ENCODE measurements at regions of chr1 and their contacts with region 1.

Region 1: GRCh38 chr1:116570358-116571200 is at the start of gene CD58:
- DNase-seq: peak; percentile 95 to 97 (median 95)
- ATAC-seq: peak; percentile 91
- H3K4me3 ChIP-seq: peak within 1 kb of the TSS; percentile 82
- H3K27ac ChIP-seq: peak within 1 kb of the TSS; percentile 88
- H3K4me1 ChIP-seq: peaks cover 45 to 54% of the 10 kb centered on the region in 2 experiments
- H3K27me3 ChIP-seq: no peaks in the 10 kb centered on the region
- CTCF ChIP-seq: peak; percentile 80 to 90 (median 83)
- EP300 ChIP-seq: no peak; the same call in 1 of the 2 replicates
- POLR2A ChIP-seq: peak; percentile 89
- RAD21 ChIP-seq: peak; percentile 52 to 59
- polyA plus RNA-seq, gene CD58: 24.6 to 33.0 TPM

Region 2: DNA sequence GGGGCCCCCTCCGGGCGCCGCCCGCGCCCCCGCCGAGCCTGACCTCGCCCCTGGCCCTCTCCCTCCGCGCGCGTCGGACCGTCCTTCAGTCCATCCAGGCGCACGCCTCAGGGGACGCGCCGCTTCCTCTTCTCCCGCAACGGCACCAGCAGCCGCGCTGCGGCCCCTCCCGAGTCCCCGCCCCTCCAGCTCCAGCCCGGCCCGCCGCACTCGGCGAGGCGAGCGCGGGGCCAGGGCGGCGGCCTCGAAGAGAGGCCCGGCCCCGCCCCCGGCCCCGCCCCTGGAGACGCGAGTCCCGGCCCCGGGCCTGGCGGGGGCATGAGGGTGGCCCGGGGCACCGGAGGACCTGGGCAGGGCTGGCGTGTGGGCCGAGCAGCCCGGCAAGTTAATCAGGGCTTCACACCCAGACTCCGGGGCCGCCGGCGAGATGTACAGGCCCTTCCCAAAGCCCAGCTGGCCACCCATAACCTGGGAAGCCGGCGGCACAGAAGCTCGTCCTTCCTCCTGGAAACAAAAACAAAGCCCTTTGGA is 97.1 kb after region 1 on chr1 and contains the start of gene IGSF3:
- CTCF ChIA-PET with region 1: interaction called, 10 read pairs
- POLR2A ChIA-PET with region 1: interaction called, 3 read pairs
- in situ Hi-C with region 1: no loop called
- intact Hi-C with region 1: loop called (anchors 1 kb)
- DNase-seq: peak; percentile 93 to 97 (median 95)
- ATAC-seq: peak; percentile 97
- H3K4me3 ChIP-seq: peak within 1 kb of the TSS; percentile 61
- H3K27ac ChIP-seq: peak within 1 kb of the TSS; percentile 30; the same call in 1 of the 3 replicates
- H3K4me1 ChIP-seq: peaks cover 17 to 20% of the 10 kb centered on the region in 2 experiments
- H3K27me3 ChIP-seq: no peaks in the 10 kb centered on the region
- CTCF ChIP-seq: no peak; a peak in 1 of 6 replicates
- EP300 ChIP-seq: no peak
- POLR2A ChIP-seq: no peak; the same call in 1 of the 2 replicates
- RAD21 ChIP-seq: no peak
- polyA plus RNA-seq, gene IGSF3: 1.1 to 1.2 TPM

Region 3: GRCh38 chr1:116724765-116725375 is 154.3 kb after region 1 on chr1:
- CTCF ChIA-PET with region 1: no interaction called
- POLR2A ChIA-PET with region 1: no interaction called
- in situ Hi-C with region 1: no loop called
- intact Hi-C with region 1: loop called (anchors 5 kb)
- DNase-seq: peak; percentile 64 to 88 (median 71)
- ATAC-seq: peak; percentile 78
- H3K4me3 ChIP-seq: no peak overlapping the region
- H3K27ac ChIP-seq: no peak overlapping the region
- H3K4me1 ChIP-seq: peaks cover 0 to 6% of the 10 kb centered on the region in 2 experiments; a peak in 2 of 5 replicates
- H3K27me3 ChIP-seq: no peaks in the 10 kb centered on the region
- CTCF ChIP-seq: peak; percentile 65 to 88 (median 84); a peak in 5 of 6 replicates
- EP300 ChIP-seq: no peak
- POLR2A ChIP-seq: no peak
- RAD21 ChIP-seq: peak; percentile 64 to 76

Region 4: DNA sequence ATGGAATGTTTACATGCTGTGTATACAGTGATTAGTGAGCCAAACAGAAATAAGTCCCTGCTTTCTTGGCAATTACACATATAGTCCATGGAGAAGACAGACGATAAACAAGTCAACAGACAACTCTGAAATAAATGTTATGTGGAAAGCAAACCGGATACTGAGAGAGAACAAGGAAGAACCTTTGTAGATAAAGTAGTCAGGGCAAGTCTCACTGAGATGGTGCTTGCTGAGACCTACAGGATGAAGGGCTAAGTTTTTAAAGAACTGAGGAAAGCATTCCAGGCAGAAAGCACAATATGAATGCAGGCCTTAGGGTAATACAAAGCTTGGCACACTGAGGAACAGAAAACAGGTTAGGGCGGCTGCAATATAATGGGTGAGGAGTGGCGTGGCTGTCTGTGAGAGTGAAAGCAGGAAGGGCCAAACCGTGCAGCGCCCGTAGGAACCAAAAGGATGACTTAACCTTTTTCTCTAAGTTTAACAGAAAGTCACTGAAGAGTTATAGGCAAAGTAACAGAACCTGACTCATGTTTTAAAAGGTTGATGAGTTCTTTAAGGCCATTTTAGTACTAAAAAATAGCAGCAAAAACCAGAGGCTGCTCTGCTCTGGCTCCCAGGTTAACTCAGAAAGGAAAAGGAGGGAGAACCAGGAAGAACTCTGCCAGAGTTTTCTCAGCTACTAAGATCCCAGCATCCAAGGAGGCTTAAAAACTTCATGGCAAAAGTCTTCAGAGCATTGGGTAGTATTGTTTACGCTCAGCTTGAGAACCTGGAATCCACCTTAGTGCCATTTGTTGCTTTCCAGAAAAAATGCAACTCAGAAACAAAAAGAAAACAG is 480.9 kb after region 1 on chr1:
- CTCF ChIA-PET with region 1: interaction called, 8 read pairs
- POLR2A ChIA-PET with region 1: interaction called, 5 read pairs
- in situ Hi-C with region 1: loop called (anchors 5 kb)
- intact Hi-C with region 1: loop called (anchors 1 kb)
- DNase-seq: peak in 1 of 4 experiments; percentile 30
- ATAC-seq: peak; percentile 71
- H3K4me3 ChIP-seq: no peak overlapping the region
- H3K27ac ChIP-seq: peak overlapping the region; percentile 16
- H3K4me1 ChIP-seq: no peaks in the 10 kb centered on the region; a peak in 2 of 5 replicates
- H3K27me3 ChIP-seq: no peaks in the 10 kb centered on the region
- CTCF ChIP-seq: no peak
- EP300 ChIP-seq: no peak
- POLR2A ChIP-seq: no peak
- RAD21 ChIP-seq: no peak